ENCODE measurements at regions of chr11 and their contacts with region 1.

Region 1: GRCh38 chr11:17161515-17161914 is 46.3 kb downstream of the PIK3C2A start:
- DNase-seq: no peak
- ATAC-seq: no peak
- H3K4me3 ChIP-seq: no peak overlapping the region
- H3K27ac ChIP-seq: no peak overlapping the region
- H3K4me1 ChIP-seq: peaks cover 0 to 22% of the 10 kb centered on the region in 2 experiments; a peak in 4 of 5 replicates
- H3K27me3 ChIP-seq: no peaks in the 10 kb centered on the region
- CTCF ChIP-seq: no peak
- EP300 ChIP-seq: no peak
- POLR2A ChIP-seq: no peak
- RAD21 ChIP-seq: no peak

Region 2: GRCh38 chr11:17171916-17172315 is 10.4 kb after region 1 on chr11:
- CTCF ChIA-PET with region 1: no interaction called
- POLR2A ChIA-PET with region 1: interaction called, 13 read pairs
- in situ Hi-C with region 1: no loop called
- intact Hi-C with region 1: no loop called
- DNase-seq: no peak
- ATAC-seq: no peak
- H3K4me3 ChIP-seq: no peak overlapping the region
- H3K27ac ChIP-seq: no peak overlapping the region
- H3K4me1 ChIP-seq: no peaks in the 10 kb centered on the region
- H3K27me3 ChIP-seq: no peaks in the 10 kb centered on the region
- CTCF ChIP-seq: no peak
- EP300 ChIP-seq: no peak
- POLR2A ChIP-seq: no peak
- RAD21 ChIP-seq: no peak